Sigmoid colon (tissue), 7 donors: ENCODE measurements at regions of chr10 and their contacts with region 1.

Region 1: DNA sequence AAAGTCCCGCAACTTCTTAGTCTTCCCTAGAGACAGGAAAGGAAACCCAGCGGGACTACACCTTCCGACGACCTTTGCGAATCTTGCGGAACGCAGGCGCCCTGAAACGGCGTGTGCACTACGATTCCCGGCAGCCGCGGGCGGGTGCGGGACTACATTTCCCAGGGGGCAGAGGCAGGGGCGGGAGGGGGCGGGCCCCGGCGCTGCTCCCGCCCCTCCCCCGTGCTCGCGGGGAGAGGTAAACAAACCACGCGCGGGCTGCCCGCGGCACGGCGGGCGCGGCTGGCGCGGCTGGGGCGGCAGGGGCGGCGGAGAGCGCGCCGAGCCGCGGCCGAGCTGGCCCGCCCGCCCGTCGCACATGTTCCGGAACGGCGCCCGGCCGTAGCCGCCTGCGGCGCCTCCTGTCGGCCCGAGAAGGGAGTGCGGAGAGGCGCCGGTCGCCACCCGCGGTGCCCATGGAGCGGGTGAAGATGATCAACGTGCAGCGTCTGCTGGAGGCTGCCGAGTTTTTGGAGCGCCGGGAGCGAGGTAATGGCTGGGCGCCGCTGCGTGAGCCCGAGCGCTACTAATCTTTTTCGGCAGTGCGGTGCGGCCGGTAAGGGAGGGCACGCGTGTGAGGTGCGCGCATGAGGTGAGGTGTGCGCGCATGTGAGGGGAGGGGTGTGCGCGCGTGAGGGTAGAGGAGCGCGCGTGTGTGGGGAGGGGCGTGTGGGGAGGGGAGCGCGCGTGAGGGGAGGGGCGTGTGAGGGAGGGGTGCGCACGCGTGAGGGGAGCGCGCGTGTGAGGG is 18.5 kb downstream of the MXI1 start:
- DNase-seq: peak; percentile 97
- H3K4me3 ChIP-seq: peak overlapping the region; percentile 76 to 87 (median 83)
- H3K27ac ChIP-seq: peak overlapping the region; percentile 92 to 98 (median 96)
- H3K4me1 ChIP-seq: peaks cover 0 to 57% (median 43%) of the 10 kb centered on the region in 4 donors
- H3K27me3 ChIP-seq: no peaks in the 10 kb centered on the region
- CTCF ChIP-seq: peak; percentile 57 to 65 (median 62)
- EP300 ChIP-seq: peak in 1 of 4 donors; percentile 29
- POLR2A ChIP-seq: no peak

Region 2: DNA sequence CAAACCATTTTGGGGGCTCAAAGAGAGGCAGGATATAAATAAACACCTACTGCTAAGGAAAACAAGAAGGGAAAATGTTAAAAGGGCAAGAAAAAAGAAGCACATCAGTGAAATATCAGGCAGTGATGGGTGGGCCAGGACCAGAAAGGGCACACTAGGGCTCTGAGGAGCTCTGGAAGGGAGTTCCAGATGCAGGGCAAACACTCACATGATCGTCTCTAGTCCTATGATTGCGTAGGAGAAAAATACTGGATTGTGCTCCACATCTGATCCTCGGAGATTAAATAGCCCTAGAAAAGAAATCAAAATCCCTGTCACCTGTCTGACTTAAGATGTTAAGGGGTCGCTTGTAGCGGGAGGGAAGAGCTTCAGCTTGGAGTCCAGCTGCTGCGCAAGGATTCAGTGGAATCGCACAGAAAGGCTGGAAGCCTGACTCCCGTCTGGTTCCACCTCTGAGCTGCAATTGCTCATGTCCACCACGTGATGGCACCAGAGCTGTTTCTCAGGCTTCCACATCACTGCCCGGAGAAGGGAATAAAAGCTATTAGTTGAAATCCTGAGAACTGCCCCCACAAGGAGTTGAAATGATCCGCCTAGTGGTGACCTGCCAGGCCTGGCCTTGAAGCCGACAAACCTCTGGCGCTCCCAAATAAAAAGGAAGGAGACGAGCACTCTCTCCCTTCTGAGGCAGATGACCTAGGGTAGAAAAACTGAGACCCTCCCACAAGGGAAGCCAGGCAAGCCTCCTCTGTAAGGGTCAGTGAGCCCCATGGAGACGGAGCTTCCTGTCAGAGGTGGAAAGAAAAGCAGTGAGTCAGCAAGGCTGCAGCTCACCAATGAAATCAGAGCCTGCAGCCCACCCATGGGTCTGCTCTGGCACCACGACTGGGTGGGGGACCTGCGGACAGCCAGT is 341.8 kb before region 1 on chr10:
- intact Hi-C with region 1: loop called (anchors 5 kb)
- DNase-seq: peak; percentile 89
- H3K4me3 ChIP-seq: peak overlapping the region in 2 of 4 donors; percentile 1 to 10
- H3K27ac ChIP-seq: peak overlapping the region; percentile 23 to 55 (median 52)
- H3K4me1 ChIP-seq: peaks cover 0 to 12% (median 8%) of the 10 kb centered on the region in 4 donors
- H3K27me3 ChIP-seq: no peaks in the 10 kb centered on the region
- CTCF ChIP-seq: peak; percentile 80 to 96 (median 93)
- EP300 ChIP-seq: no peak
- POLR2A ChIP-seq: no peak

Region 3: GRCh38 chr10:109922976-109923921 is 302.7 kb before region 1 on chr10 and contains the start of gene XPNPEP1:
- intact Hi-C with region 1: loop called (anchors 5 kb)
- DNase-seq: peak; percentile 95
- H3K4me3 ChIP-seq: peak within 1 kb of the TSS; percentile 44 to 98 (median 93)
- H3K27ac ChIP-seq: peak within 1 kb of the TSS; percentile 86 to 97 (median 92)
- H3K4me1 ChIP-seq: peaks cover 0 to 28% (median 19%) of the 10 kb centered on the region in 4 donors
- H3K27me3 ChIP-seq: no peaks in the 10 kb centered on the region
- CTCF ChIP-seq: no peak
- EP300 ChIP-seq: no peak
- POLR2A ChIP-seq: peak; percentile 16 to 61
- total RNA-seq, gene XPNPEP1: 53.5 to 59.1 (median 56.5) TPM

Region 4: DNA sequence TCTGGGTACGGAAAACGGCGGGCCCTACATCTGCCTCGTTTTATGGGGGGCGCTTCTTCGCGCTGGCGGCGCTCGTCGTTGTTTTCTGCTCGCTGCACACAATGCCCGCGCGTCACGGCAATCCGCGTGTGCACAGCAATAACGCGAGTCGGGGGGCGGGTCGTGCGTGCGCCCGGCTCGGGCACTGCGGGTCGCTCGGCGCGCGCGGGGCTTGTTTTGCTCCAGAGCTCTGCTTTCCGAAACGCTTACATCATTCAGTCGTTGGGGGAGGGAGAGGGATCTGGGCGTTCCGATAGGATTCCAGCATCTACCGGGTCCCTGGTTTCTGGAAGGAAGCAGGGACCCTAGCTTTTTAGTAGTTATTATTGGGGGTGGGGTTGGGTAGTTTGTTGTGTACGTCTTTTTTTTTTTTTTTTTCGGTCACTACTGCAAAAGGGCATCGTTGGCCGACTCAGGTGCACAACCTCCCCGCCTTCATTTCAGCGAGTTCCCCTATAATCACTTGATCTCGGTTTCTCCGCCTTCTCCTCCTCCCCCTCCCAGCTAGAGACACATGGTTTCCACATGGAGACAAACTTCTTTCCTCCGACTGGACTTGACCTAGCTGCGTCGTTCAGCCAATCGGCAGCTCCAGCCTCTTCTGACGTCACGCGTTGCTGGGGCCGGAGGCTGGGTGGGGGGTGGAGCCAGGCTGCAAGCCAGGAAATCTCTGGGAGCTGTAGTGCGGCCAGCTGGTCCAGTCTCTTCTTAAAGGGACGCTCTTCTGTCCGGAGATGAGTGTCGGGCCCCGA is 15.1 kb before region 1 on chr10:
- intact Hi-C with region 1: loop called (anchors 1 kb)
- DNase-seq: peak; percentile 99
- H3K4me3 ChIP-seq: peak overlapping the region; percentile 62 to 92 (median 76)
- H3K27ac ChIP-seq: peak overlapping the region; percentile 94 to 100 (median 98)
- H3K4me1 ChIP-seq: peaks cover 0 to 45% (median 35%) of the 10 kb centered on the region in 4 donors
- H3K27me3 ChIP-seq: no peaks in the 10 kb centered on the region
- CTCF ChIP-seq: no peak
- EP300 ChIP-seq: peak in 2 of 4 donors; percentile 39 to 75
- POLR2A ChIP-seq: peak; percentile 73 to 85

Region 5: GRCh38 chr10:110279407-110279986 is 53.5 kb after region 1 on chr10:
- intact Hi-C with region 1: loop called (anchors 5 kb)
- DNase-seq: peak; percentile 72
- H3K4me3 ChIP-seq: peak overlapping the region in 1 of 4 donors; percentile 5
- H3K27ac ChIP-seq: peak overlapping the region in 2 of 4 donors; percentile 25 to 49
- H3K4me1 ChIP-seq: peaks cover 0 to 31% (median 16%) of the 10 kb centered on the region in 4 donors
- H3K27me3 ChIP-seq: no peaks in the 10 kb centered on the region
- CTCF ChIP-seq: peak; percentile 66 to 74 (median 69)
- EP300 ChIP-seq: no peak
- POLR2A ChIP-seq: no peak

Region 6: GRCh38 chr10:110567201-110568054 is 341.5 kb after region 1 on chr10 and contains the start of gene SMC3:
- intact Hi-C with region 1: loop called (anchors 10 kb)
- DNase-seq: peak; percentile 95
- H3K4me3 ChIP-seq: peak within 1 kb of the TSS; percentile 68 to 99 (median 94)
- H3K27ac ChIP-seq: peak within 1 kb of the TSS; percentile 90 to 98 (median 92)
- H3K4me1 ChIP-seq: peaks cover 0 to 46% (median 42%) of the 10 kb centered on the region in 4 donors
- H3K27me3 ChIP-seq: peaks cover 0 to 5% (median 0%) of the 10 kb centered on the region in 3 donors
- CTCF ChIP-seq: no peak
- EP300 ChIP-seq: peak in 1 of 4 donors; percentile 13
- POLR2A ChIP-seq: peak; percentile 44 to 51
- total RNA-seq, gene SMC3: 27.2 to 43.5 (median 34.8) TPM